Dorsolateral prefrontal cortex (tissue), 120 donors: ENCODE measurements at regions of chrX and their contacts with region 1.

Region 1: DNA sequence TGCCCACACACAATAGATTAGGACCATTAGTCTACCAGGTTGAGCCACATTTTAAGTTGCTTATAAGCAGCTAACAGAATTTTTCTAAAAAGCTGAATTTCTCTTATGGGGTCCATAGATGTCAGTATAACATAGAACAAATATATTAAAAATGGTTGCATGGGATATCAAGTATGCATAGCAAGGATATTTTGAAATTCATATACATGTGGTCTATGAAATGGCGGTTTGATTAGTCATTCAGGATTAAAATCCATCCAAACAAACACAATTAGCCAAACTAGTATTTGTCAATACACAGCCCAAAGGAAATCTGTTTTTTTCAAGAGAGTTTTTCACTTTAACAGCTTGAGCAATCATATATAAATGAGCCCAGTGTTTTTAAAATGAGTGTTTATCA is 33.5 kb upstream of the AMOT start:
- DNase-seq: no peak
- H3K4me3 ChIP-seq: no peak overlapping the region
- H3K27ac ChIP-seq: no peak overlapping the region
- H3K27me3 ChIP-seq: peaks cover 0 to 70% (median 19%) of the 10 kb centered on the region in 45 donors
- CTCF ChIP-seq: peak in 26 of 56 donors; percentile 9 to 44 (median 24)

Region 2: DNA sequence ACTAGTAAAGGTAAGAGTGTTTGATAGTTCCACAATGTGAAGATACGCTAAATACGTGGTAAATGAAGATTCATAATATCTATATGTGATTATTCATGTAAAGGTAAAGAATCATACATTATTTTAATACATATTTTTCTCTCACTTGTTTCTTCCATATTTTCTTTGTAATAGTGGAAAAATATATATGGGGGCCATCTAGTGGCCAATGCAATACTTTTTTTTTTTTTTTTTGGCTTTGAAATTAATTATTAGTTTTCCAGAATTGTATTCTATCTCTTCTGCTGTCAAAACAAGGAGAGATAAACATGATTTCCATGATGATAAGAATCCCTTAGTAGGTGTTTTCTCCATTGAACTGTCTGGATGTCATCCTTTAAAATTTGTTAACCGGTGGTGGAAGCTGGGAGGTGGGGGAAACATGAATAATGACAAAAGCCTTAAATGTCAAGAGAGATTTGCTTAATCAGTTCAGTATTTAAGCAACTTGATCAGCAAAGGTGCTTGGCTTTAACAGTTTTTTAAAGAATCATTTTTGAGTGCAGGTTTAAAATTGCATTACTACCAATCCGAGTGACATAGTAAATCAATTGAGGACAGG is 1201.0 kb after region 1 on chrX:
- intact Hi-C with region 1: loop called in 1 of 2 experiments (anchors 10 kb)
- DNase-seq: no peak
- H3K4me3 ChIP-seq: no peak overlapping the region
- H3K27ac ChIP-seq: no peak overlapping the region
- H3K27me3 ChIP-seq: peaks cover 0 to 55% (median 12%) of the 10 kb centered on the region in 45 donors
- CTCF ChIP-seq: peak in 49 of 56 donors; percentile 9 to 60 (median 37)